ENCODE measurements at regions of chr4 and their contacts with region 1.

Region 1: DNA sequence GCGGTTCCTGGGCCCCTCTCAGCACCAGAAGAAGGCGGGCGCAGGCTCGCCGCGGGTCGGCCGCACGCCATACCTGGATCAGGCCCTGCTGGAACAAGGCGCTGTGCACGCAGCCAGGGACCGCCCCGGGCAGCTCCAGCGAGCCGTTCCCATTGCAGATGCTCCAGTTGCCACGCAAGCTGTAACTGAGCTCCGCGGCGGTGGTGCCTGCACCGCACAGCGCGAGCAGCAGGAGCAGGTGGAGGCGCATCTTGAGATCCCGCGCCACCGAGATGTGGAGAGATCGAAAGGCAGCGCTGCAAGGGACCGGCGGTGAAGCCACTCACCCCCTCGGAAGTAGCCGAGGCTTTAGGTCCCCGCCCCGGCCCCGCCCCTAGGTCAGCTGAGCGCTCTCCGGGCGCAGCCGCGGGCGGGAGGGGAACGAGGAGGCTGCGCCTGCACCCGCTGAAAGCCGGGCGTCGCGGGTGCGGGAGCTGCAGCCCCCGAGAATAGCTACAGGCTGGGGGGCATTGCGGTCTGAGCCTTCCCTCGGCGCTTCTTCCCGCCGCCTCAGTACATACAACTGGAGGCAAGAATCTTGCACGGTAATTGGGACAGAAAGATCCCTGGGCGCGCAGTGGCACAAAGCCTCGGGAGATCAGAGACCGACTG is at the start of gene MANBA:
- DNase-seq: peak; percentile 77 to 88 (median 80)
- H3K4me3 ChIP-seq: peak within 1 kb of the TSS; percentile 87
- H3K4me3 Mint-ChIP-seq: peak within 1 kb of the TSS; percentile 90 to 98 (median 95)
- H3K27ac ChIP-seq: peak within 1 kb of the TSS; percentile 55
- H3K27ac Mint-ChIP-seq: peak within 1 kb of the TSS; percentile 51 to 96 (median 93)
- H3K4me1 ChIP-seq: peaks cover 19% of the 10 kb centered on the region
- H3K4me1 Mint-ChIP-seq: peaks cover 32 to 55% (median 53%) of the 10 kb centered on the region in 3 donors
- H3K27me3 ChIP-seq: no peaks in the 10 kb centered on the region
- H3K27me3 Mint-ChIP-seq: peaks cover 4 to 13% of the 10 kb centered on the region in 2 donors
- total RNA-seq, gene MANBA: 9.1 to 9.5 TPM

Region 2: DNA sequence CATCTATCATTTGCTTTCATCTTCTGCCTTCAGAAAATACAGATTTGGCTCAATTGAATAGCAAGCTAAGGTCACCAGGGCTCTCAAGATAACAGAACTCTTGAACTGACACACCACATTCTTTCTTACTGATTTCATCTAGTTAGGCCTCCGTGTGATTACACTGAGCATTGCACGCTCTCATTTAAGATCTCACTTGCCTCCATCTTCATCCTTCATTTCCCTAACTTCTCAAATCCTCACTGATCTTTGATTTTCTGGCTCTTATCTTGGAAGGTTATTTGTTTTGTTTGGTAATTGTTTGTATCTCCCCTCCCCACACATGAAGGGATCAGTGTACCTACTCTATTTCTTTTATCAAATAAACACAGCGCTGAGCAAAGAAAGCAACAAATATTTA is 47.7 kb before region 1 on chr4:
- CTCF ChIA-PET with region 1: no interaction called
- POLR2A ChIA-PET with region 1: no interaction called
- DNase-seq: no peak
- H3K4me3 ChIP-seq: no peak overlapping the region
- H3K4me3 Mint-ChIP-seq: no peak overlapping the region
- H3K27ac ChIP-seq: no peak overlapping the region
- H3K27ac Mint-ChIP-seq: peak overlapping the region in 1 of 8 donors; percentile 79
- H3K4me1 ChIP-seq: no peaks in the 10 kb centered on the region
- H3K4me1 Mint-ChIP-seq: peaks cover 12 to 22% (median 14%) of the 10 kb centered on the region in 3 donors
- H3K27me3 ChIP-seq: no peaks in the 10 kb centered on the region
- H3K27me3 Mint-ChIP-seq: no peaks in the 10 kb centered on the region

Region 3: DNA sequence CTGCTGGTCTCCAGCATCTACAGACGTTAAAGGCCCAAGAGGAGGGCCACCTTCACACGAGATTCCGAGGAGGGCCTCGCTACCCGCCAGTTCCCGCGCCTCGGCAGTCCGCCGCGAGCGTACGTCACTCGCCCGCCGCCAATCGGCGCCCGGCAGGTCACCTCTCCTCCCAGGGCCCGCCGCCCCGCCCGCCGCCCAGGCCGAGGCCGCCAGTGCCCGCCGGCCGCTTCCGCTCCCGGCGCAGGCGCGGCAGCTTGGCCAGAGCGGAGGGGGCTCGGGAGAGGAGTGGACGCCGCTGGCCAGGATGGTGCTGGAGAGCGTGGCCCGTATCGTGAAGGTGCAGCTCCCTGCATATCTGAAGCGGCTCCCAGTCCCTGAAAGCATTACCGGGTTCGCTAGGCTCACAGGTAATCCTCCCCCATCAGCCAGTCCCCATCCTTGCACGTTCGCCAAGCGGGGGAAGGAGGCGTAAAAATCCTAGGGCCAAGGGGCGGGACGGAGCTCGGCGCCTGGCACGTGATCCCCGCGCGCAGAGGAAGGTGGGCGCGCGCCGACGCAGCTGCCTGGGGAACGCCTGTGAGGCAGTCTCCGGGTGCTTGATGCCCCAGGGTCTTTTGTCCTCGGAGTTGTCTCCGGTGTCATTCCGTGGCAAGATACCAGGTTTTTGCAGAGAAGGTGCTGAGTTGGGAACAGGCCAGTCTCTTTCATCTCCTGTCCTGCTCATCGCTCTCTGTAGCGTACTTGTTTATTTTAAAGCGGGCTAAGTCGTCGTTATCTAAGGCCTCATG is 108.2 kb after region 1 on chr4 and contains the start of gene CISD2:
- CTCF ChIA-PET with region 1: no interaction called
- POLR2A ChIA-PET with region 1: interaction called, 17 read pairs
- DNase-seq: peak; percentile 88 to 95 (median 93)
- H3K4me3 ChIP-seq: peak within 1 kb of the TSS; percentile 80
- H3K4me3 Mint-ChIP-seq: peak within 1 kb of the TSS; percentile 89 to 99 (median 96)
- H3K27ac ChIP-seq: peak within 1 kb of the TSS; percentile 98
- H3K27ac Mint-ChIP-seq: peak within 1 kb of the TSS; percentile 97 to 100 (median 100)
- H3K4me1 ChIP-seq: peaks cover 26% of the 10 kb centered on the region
- H3K4me1 Mint-ChIP-seq: peaks cover 56 to 83% (median 79%) of the 10 kb centered on the region in 3 donors
- H3K27me3 ChIP-seq: no peaks in the 10 kb centered on the region
- H3K27me3 Mint-ChIP-seq: no peaks in the 10 kb centered on the region
- total RNA-seq, gene CISD2: 43.6 to 43.7 TPM

Region 4: GRCh38 chr4:103075901-103076739 is 315.4 kb after region 1 on chr4:
- CTCF ChIA-PET with region 1: no interaction called
- POLR2A ChIA-PET with region 1: interaction called, 10 read pairs
- DNase-seq: peak; percentile 45 to 84 (median 69)
- H3K4me3 ChIP-seq: peak overlapping the region; percentile 49
- H3K4me3 Mint-ChIP-seq: peak overlapping the region; percentile 89 to 99 (median 95)
- H3K27ac ChIP-seq: peak overlapping the region; percentile 94
- H3K27ac Mint-ChIP-seq: peak overlapping the region; percentile 89 to 100 (median 99)
- H3K4me1 ChIP-seq: peaks cover 26% of the 10 kb centered on the region
- H3K4me1 Mint-ChIP-seq: peaks cover 42 to 66% (median 62%) of the 10 kb centered on the region in 3 donors
- H3K27me3 ChIP-seq: no peaks in the 10 kb centered on the region
- H3K27me3 Mint-ChIP-seq: no peaks in the 10 kb centered on the region

Measured in CD8-positive, alpha-beta memory T cell (primary cell).